A549 (cell line): ENCODE measurements at regions of chr1 and their contacts with region 1.

Region 1: DNA sequence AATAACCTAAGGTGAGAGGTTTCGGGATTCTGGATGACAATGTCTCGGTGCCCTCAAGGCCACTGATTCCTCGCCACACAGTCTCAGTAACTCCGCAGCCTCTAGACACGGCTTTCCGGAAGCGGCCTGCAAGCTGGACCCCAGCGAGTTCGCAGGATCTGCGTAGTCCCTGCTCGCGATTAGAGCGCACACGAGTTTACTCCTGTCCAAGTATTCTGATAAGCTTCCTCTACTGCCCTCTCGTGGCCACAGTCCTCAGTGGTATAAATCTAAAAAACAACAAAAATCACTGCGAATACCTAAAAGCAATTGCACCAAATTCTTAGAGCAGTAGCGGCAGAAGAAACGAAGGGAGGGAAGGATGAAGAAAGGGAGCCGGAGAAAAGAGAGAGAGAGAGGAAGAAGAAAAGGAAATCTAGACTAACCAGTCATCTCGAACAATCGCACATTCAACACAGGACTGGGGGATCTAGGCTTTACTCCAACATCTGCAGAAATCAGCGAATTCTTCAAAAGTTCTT is 1.1 kb upstream of the PLXNA2 start:
- DNase-seq: peak; percentile 84 to 90
- ATAC-seq: peak; percentile 64 to 86
- H3K4me3 ChIP-seq: peak overlapping the region; percentile 69
- H3K27ac ChIP-seq: peak overlapping the region; percentile 11 to 12; a peak in 2 of 6 replicates
- H3K4me1 ChIP-seq: peaks cover 15% of the 10 kb centered on the region
- CTCF ChIP-seq: peak; percentile 86
- EP300 ChIP-seq: no peak
- POLR2A ChIP-seq: no peak
- RAD21 ChIP-seq: peak; percentile 85 to 88

Region 2: DNA sequence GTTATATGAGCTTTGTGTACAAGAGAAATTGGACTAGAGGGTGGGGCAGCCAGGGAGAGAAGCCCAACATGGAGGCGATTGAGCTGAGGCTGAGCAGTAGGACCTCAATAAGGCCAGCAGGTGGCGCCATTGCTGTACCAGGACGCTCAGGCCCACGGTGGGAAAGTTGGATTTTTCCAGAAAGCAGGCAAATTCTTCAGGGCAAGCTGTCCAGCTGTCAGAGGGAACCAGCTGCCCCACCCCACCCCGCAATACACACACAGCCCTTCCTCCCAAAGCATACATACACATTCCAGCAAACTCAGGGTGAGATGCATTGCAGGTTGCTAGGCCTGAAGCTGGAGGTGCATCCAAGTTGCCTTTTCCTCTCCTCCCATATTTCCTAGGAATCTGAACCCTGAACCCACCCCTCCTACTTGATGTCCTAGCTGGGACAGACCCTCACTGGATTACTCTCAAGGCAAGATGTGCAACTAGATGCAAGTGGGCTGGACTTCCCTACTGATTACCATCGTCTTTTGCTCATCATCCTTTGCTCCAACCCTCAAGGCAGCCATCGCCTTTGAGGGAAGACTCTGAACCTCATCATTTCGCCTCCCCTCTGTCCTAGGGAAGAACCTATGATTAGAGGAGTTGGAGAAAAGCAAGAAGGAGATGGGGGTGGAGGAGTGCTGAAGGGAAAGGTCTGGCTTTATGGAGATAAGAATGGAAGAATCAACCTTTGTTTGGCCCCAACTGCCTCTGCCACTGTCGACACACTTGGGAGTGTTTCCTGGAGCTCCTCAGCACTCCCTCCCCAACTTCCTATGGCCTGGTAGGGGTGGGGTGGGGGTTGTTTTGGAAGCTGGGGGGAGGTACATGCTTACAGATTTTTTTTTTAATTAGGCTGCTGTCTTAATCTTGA is 359.9 kb before region 1 on chr1:
- CTCF ChIA-PET with region 1: interaction called, 12 read pairs
- POLR2A ChIA-PET with region 1: no interaction called
- DNase-seq: peak; percentile 81 to 85
- ATAC-seq: peak; percentile 90 to 99
- H3K4me3 ChIP-seq: no peak overlapping the region
- H3K27ac ChIP-seq: no peak overlapping the region
- H3K4me1 ChIP-seq: peaks cover 7% of the 10 kb centered on the region; the same call in 2 of the 3 replicates
- CTCF ChIP-seq: peak; percentile 87
- EP300 ChIP-seq: no peak
- POLR2A ChIP-seq: no peak
- RAD21 ChIP-seq: peak; percentile 82 to 85

Region 3: DNA sequence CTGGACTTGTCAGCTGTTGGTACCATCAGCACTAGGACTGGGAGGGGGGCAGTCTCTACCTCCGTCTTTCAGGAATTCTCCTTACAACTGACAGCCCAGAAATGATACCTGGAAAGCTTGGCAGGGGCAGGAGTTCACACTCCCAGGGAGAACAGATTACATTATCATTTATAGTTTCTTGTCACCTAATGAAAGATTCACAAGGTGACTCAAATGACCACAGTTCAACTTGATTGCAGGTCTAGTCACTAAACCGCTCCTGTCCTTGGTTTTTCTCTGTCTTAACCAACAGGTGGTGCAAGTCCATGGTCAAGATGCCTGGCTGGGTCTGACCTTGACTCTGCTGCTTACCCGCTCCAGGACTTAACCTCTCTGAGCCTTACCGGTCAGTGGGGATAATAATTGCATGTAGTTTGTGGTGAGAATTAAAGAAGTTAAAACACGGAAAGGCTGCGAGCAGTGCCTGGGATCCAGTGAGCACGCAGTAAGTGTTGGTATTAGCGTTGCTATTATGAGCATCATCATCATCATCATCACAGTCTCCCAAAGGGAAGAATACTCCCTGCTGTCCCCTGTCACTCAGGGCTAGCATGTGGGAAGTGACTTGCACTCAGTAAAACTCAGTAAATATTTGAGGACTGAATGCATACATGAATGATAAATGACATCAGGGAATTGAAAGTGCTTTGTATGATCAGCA is 209.0 kb before region 1 on chr1:
- CTCF ChIA-PET with region 1: interaction called, 21 read pairs
- POLR2A ChIA-PET with region 1: no interaction called
- DNase-seq: peak; percentile 28 to 42
- ATAC-seq: peak; percentile 65 to 78; a peak in 4 of 6 replicates
- H3K4me3 ChIP-seq: no peak overlapping the region
- H3K27ac ChIP-seq: no peak overlapping the region
- H3K4me1 ChIP-seq: no peaks in the 10 kb centered on the region
- CTCF ChIP-seq: peak; percentile 35
- EP300 ChIP-seq: no peak
- POLR2A ChIP-seq: no peak
- RAD21 ChIP-seq: peak; percentile 17 to 38; a peak in 2 of 5 replicates

Region 4: DNA sequence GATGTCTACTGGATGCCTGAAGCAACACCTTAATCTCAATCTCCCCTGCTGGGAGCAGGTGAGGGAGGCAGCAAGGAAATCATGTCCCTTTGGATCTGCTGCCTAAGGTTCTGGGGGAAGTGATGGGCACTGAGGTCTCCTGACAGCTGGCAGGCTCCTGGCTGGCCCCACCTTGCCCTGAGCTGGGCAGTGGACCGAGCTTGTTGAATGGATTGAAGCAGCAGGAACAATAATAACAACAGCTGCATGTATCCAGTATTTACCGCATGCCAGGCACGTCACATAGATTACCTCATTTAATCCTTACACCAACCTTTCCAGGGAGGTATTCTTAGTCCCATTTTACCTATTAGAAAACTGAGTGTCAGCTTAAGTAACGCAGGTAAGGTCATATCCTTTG is 134.9 kb before region 1 on chr1:
- CTCF ChIA-PET with region 1: interaction called, 28 read pairs
- POLR2A ChIA-PET with region 1: no interaction called
- DNase-seq: no peak
- ATAC-seq: no peak
- H3K4me3 ChIP-seq: no peak overlapping the region
- H3K27ac ChIP-seq: no peak overlapping the region
- H3K4me1 ChIP-seq: peaks cover 13% of the 10 kb centered on the region
- CTCF ChIP-seq: no peak
- EP300 ChIP-seq: no peak
- POLR2A ChIP-seq: no peak
- RAD21 ChIP-seq: no peak

Region 5: GRCh38 chr1:208132287-208132883 is 112.9 kb before region 1 on chr1:
- CTCF ChIA-PET with region 1: interaction called, 417 read pairs
- POLR2A ChIA-PET with region 1: interaction called, 3 read pairs
- DNase-seq: peak; percentile 78 to 95
- ATAC-seq: peak; percentile 98 to 100
- H3K4me3 ChIP-seq: no peak overlapping the region
- H3K27ac ChIP-seq: peak overlapping the region in 1 of 2 experiments; percentile 33; a peak in 1 of 6 replicates
- H3K4me1 ChIP-seq: peaks cover 10% of the 10 kb centered on the region; the same call in 2 of the 3 replicates
- CTCF ChIP-seq: peak; percentile 90
- EP300 ChIP-seq: no peak
- POLR2A ChIP-seq: no peak
- RAD21 ChIP-seq: peak; percentile 68 to 75

Region 6: GRCh38 chr1:208264469-208265121 is 19.4 kb after region 1 on chr1:
- CTCF ChIA-PET with region 1: interaction called, 12 read pairs
- POLR2A ChIA-PET with region 1: no interaction called
- DNase-seq: no peak
- ATAC-seq: no peak
- H3K4me3 ChIP-seq: no peak overlapping the region
- H3K27ac ChIP-seq: no peak overlapping the region
- H3K4me1 ChIP-seq: no peaks in the 10 kb centered on the region
- CTCF ChIP-seq: no peak
- EP300 ChIP-seq: no peak
- POLR2A ChIP-seq: no peak
- RAD21 ChIP-seq: no peak